Naive thymus-derived CD4-positive, alpha-beta T cell (primary cell): ENCODE measurements at regions of chr10 and their contacts with region 1.

Region 1: GRCh38 chr10:42638055-42638820 is at the start of gene ZNF33B:
- DNase-seq: peak; percentile 84 to 97 (median 94)
- ATAC-seq: peak; percentile 96
- H3K4me3 ChIP-seq: peak within 1 kb of the TSS; percentile 98
- H3K4me3 Mint-ChIP-seq: peak within 1 kb of the TSS; percentile 86 to 99 (median 97)
- H3K27ac ChIP-seq: peak within 1 kb of the TSS; percentile 84
- H3K27ac Mint-ChIP-seq: peak within 1 kb of the TSS; percentile 95 to 99 (median 97)
- H3K4me1 ChIP-seq: peaks cover 6 to 14% of the 10 kb centered on the region in 2 donors
- H3K4me1 Mint-ChIP-seq: peaks cover 29 to 62% (median 45%) of the 10 kb centered on the region in 7 donors
- H3K27me3 ChIP-seq: no peaks in the 10 kb centered on the region
- H3K27me3 Mint-ChIP-seq: no peaks in the 10 kb centered on the region
- total RNA-seq, gene ZNF33B: 26.3 to 77.1 (median 34.8) TPM

Region 2: DNA sequence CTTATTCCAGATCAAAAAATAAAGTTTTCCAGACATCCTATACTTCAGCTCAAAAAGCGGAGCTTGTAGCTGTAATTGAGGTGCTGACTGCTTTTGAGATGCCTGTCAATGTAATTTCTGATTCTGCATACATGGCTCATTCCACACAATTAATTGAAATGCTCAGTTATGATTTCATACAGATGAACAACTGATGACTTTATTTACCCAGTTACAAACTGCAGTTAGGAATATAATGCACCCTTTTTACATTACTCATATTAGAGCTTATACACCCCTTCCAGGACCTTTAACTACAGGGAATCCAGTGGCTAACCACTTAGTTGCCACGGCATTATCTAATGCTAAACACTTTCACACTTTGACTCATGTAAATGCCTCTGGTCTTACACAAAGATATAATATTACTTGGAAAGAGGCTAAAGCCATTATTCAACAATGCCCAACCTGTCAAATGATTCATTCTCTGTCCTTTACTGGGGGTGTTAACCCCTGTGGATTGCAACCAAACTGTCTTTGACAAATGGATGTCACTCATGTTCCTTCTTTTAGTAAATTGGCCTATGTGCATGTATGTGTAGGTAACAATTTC is 147.1 kb before region 1 on chr10:
- CTCF ChIA-PET with region 1: no interaction called
- POLR2A ChIA-PET with region 1: no interaction called
- intact Hi-C with region 1: no loop called
- DNase-seq: no peak
- ATAC-seq: no peak
- H3K4me3 ChIP-seq: no peak overlapping the region
- H3K4me3 Mint-ChIP-seq: no peak overlapping the region
- H3K27ac ChIP-seq: no peak overlapping the region
- H3K27ac Mint-ChIP-seq: no peak overlapping the region
- H3K4me1 ChIP-seq: no peaks in the 10 kb centered on the region
- H3K4me1 Mint-ChIP-seq: no peaks in the 10 kb centered on the region
- H3K27me3 ChIP-seq: no peaks in the 10 kb centered on the region
- H3K27me3 Mint-ChIP-seq: peaks cover 0 to 10% (median 0%) of the 10 kb centered on the region in 5 donors

Region 3: GRCh38 chr10:42552493-42553407 is 85.5 kb before region 1 on chr10:
- CTCF ChIA-PET with region 1: no interaction called
- POLR2A ChIA-PET with region 1: interaction called, 5 read pairs
- intact Hi-C with region 1: loop called (anchors 1 kb)
- DNase-seq: peak; percentile 83 to 92 (median 91)
- ATAC-seq: peak; percentile 98
- H3K4me3 ChIP-seq: peak overlapping the region; percentile 95
- H3K4me3 Mint-ChIP-seq: peak overlapping the region; percentile 96 to 100 (median 98)
- H3K27ac ChIP-seq: peak overlapping the region; percentile 87
- H3K27ac Mint-ChIP-seq: peak overlapping the region; percentile 86 to 98 (median 96)
- H3K4me1 ChIP-seq: peaks cover 0 to 16% of the 10 kb centered on the region in 2 donors
- H3K4me1 Mint-ChIP-seq: peaks cover 24 to 49% (median 45%) of the 10 kb centered on the region in 7 donors
- H3K27me3 ChIP-seq: no peaks in the 10 kb centered on the region
- H3K27me3 Mint-ChIP-seq: no peaks in the 10 kb centered on the region

Region 4: DNA sequence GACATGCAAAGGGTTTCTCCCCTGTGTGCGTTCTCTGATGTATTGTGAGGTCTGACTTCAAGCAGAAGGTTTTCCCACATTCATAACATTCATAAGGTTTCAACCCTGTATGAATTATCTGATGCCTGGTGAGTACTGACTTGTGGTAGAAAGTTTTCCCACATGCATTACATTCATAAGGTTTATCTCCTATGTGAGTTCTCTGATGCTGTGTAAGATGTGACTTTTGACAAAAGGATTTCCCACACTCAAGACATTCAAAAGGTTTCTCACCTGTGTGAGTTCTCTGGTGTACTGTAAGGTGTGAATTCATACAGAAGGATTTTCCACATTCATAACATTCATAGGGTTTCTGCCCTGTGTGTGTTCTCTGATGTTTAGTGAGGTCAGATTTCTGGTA is 45.0 kb before region 1 on chr10:
- CTCF ChIA-PET with region 1: no interaction called
- POLR2A ChIA-PET with region 1: no interaction called
- intact Hi-C with region 1: no loop called
- DNase-seq: no peak
- ATAC-seq: no peak
- H3K4me3 ChIP-seq: no peak overlapping the region
- H3K4me3 Mint-ChIP-seq: peak overlapping the region in 1 of 10 donors; percentile 13
- H3K27ac ChIP-seq: no peak overlapping the region
- H3K27ac Mint-ChIP-seq: no peak overlapping the region
- H3K4me1 ChIP-seq: no peaks in the 10 kb centered on the region
- H3K4me1 Mint-ChIP-seq: peaks cover 0 to 1% (median 0%) of the 10 kb centered on the region in 7 donors
- H3K27me3 ChIP-seq: no peaks in the 10 kb centered on the region
- H3K27me3 Mint-ChIP-seq: no peaks in the 10 kb centered on the region

Region 5: GRCh38 chr10:42782446-42783180 is 144.4 kb after region 1 on chr10 and contains the start of gene BMS1:
- CTCF ChIA-PET with region 1: no interaction called
- POLR2A ChIA-PET with region 1: interaction called, 16 read pairs
- intact Hi-C with region 1: loop called (anchors 1 kb)
- DNase-seq: peak; percentile 78 to 91 (median 86)
- ATAC-seq: peak; percentile 95
- H3K4me3 ChIP-seq: peak within 1 kb of the TSS; percentile 86
- H3K4me3 Mint-ChIP-seq: peak within 1 kb of the TSS; percentile 89 to 100 (median 96)
- H3K27ac ChIP-seq: peak within 1 kb of the TSS; percentile 83
- H3K27ac Mint-ChIP-seq: peak within 1 kb of the TSS; percentile 88 to 98 (median 94)
- H3K4me1 ChIP-seq: peaks cover 0 to 13% of the 10 kb centered on the region in 2 donors
- H3K4me1 Mint-ChIP-seq: peaks cover 10 to 60% (median 45%) of the 10 kb centered on the region in 7 donors
- H3K27me3 ChIP-seq: no peaks in the 10 kb centered on the region
- H3K27me3 Mint-ChIP-seq: peaks cover 0 to 3% (median 0%) of the 10 kb centered on the region in 5 donors
- total RNA-seq, gene BMS1: 9.7 to 20.0 (median 16.9) TPM

Region 6: DNA sequence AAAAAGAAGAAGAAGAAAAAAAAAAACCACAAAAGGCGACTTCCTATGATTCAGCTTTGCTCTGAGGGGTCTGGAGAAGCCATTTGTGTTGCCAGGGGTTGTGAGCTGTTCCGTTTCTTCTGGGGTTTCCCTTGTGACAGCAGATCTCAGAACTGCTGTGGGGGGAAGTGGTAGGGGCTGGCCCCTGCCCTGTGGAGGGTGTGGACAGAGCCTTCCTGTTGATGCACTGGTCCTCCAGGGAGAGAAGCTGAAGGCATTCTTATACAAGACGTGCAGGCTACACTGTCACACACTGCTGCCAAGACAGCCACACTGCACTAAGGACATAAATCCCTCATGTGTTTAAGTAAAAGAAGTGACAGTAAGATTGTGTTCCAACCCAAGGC is 482.7 kb after region 1 on chr10:
- CTCF ChIA-PET with region 1: no interaction called
- POLR2A ChIA-PET with region 1: no interaction called
- intact Hi-C with region 1: loop called in 1 of 2 experiments (anchors 5 kb)
- DNase-seq: peak in 6 of 9 donors; percentile 22 to 71 (median 36)
- ATAC-seq: peak; percentile 94
- H3K4me3 ChIP-seq: no peak overlapping the region
- H3K4me3 Mint-ChIP-seq: peak overlapping the region in 8 of 10 donors; percentile 42 to 80 (median 56)
- H3K27ac ChIP-seq: no peak overlapping the region
- H3K27ac Mint-ChIP-seq: peak overlapping the region; percentile 42 to 96 (median 80)
- H3K4me1 ChIP-seq: peaks cover 13 to 15% of the 10 kb centered on the region in 2 donors
- H3K4me1 Mint-ChIP-seq: peaks cover 19 to 56% (median 21%) of the 10 kb centered on the region in 7 donors
- H3K27me3 ChIP-seq: no peaks in the 10 kb centered on the region
- H3K27me3 Mint-ChIP-seq: no peaks in the 10 kb centered on the region

Region 7: DNA sequence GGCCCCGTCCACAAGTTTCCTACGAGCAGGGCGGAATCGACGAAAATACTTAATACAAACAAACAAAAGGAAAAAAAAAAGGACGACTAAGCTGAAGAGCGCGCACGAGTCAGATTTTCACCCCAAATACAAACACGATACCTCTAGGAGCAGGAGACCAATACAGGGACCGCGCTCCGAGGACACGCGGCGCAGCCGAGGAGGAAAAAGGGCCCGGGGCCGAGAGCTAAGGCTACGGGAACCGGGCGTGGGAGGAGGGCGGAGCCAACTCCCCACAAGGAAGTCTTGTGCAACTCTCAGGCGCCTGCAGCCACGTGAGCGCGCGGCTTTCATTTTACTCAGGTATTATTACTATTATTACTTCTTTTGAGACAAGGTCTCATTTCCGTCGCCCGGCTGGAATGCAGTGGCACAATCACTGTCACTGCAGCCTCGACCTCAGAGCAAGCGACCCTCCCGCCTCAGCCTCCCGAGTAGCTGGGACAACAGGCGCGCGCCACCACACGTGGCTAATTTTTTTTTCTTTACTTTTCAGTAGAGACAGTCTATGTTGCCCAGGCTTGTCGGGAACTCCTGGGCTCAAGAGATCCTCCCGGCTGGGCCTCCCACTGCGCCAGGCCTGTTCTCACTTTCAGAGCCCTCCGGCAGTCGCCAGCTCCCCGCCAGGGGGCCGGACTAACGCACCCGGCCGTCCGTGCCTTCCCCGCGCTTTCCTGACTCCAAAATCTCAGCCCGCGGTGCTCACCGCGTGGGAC is 769.5 kb after region 1 on chr10:
- CTCF ChIA-PET with region 1: no interaction called
- POLR2A ChIA-PET with region 1: no interaction called
- intact Hi-C with region 1: loop called (anchors 5 kb)
- DNase-seq: peak; percentile 67 to 91 (median 79)
- ATAC-seq: peak; percentile 48
- H3K4me3 ChIP-seq: peak overlapping the region; percentile 99
- H3K4me3 Mint-ChIP-seq: peak overlapping the region; percentile 91 to 100 (median 98)
- H3K27ac ChIP-seq: peak overlapping the region; percentile 100
- H3K27ac Mint-ChIP-seq: peak overlapping the region; percentile 97 to 99 (median 98)
- H3K4me1 ChIP-seq: peaks cover 28 to 37% of the 10 kb centered on the region in 2 donors
- H3K4me1 Mint-ChIP-seq: peaks cover 31 to 50% (median 39%) of the 10 kb centered on the region in 7 donors
- H3K27me3 ChIP-seq: no peaks in the 10 kb centered on the region
- H3K27me3 Mint-ChIP-seq: peaks cover 0 to 2% (median 0%) of the 10 kb centered on the region in 5 donors

Region 8: GRCh38 chr10:43606322-43607198 is 968.3 kb after region 1 on chr10 and contains the start of gene ZNF485:
- CTCF ChIA-PET with region 1: no interaction called
- POLR2A ChIA-PET with region 1: no interaction called
- intact Hi-C with region 1: loop called in 1 of 2 experiments (anchors 1 kb)
- DNase-seq: peak; percentile 41 to 61 (median 56)
- ATAC-seq: peak; percentile 90
- H3K4me3 ChIP-seq: peak within 1 kb of the TSS; percentile 82
- H3K4me3 Mint-ChIP-seq: peak within 1 kb of the TSS; percentile 80 to 93 (median 85)
- H3K27ac ChIP-seq: peak within 1 kb of the TSS; percentile 75
- H3K27ac Mint-ChIP-seq: peak within 1 kb of the TSS; percentile 62 to 88 (median 77)
- H3K4me1 ChIP-seq: peaks cover 11 to 12% of the 10 kb centered on the region in 2 donors
- H3K4me1 Mint-ChIP-seq: peaks cover 11 to 47% (median 45%) of the 10 kb centered on the region in 7 donors
- H3K27me3 ChIP-seq: no peaks in the 10 kb centered on the region
- H3K27me3 Mint-ChIP-seq: peaks cover 0 to 8% (median 0%) of the 10 kb centered on the region in 5 donors
- total RNA-seq, gene ZNF485: 2.9 to 13.1 (median 5.3) TPM